WTC11 (cell line): ENCODE measurements at regions of chr11 and their contacts with region 1.

Region 1: DNA sequence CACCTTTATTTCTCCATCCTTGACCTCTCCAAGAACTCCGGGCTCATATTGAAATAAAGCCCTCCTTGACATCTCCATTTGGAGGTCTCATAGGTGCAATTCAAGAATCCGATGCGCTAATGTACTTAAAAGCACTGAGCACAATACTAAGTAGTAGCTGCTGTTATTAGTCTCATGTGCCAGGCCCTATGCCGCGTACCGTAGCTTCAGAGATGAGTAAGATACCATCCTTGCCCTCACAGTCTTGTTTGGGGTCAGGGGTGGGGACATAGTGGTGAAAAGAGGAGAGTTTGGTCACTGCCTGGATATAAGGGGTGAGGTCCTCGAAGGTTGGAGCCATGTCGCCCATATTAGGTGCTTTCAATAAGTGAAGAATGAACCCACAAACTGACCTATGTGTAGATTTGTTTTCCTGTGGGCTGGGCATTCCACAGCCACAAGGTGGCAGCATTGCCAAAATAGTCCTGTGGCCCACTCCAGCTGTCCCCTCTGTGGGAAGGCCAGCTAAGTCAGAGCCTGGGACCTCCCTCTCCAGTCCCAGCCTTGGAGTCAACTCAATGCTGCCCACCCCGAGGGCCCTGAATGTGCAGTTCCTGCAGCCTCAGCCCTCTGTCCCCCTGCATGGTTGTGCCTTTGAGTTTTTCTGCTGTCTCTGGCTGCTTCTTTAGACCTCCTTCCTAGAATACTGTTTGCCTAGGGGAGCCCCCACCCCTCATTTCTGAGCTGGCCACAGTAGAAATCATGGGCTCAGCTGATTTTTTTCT is 6.5 kb downstream of the DCPS start:
- DNase-seq: peak; percentile 82
- ATAC-seq: peak; percentile 95
- H3K4me3 Mint-ChIP-seq: no peak overlapping the region
- H3K27ac Mint-ChIP-seq: no peak overlapping the region
- H3K4me1 Mint-ChIP-seq: 0 out of 2 replicates have a peak, but pooled peaks cover 4% of the 10 kb centered on the region
- H3K27me3 Mint-ChIP-seq: no peaks in the 10 kb centered on the region
- CTCF ChIP-seq: peak; percentile 56; the same call in 1 of the 2 replicates

Region 2: GRCh38 chr11:125990244-125990643 is 320.2 kb before region 1 on chr11:
- CTCF ChIA-PET with region 1: no interaction called
- POLR2A ChIA-PET with region 1: no interaction called
- DNase-seq: no peak
- ATAC-seq: no peak
- H3K4me3 Mint-ChIP-seq: no peak overlapping the region
- H3K27ac Mint-ChIP-seq: no peak overlapping the region
- H3K4me1 Mint-ChIP-seq: peaks cover 13% of the 10 kb centered on the region
- H3K27me3 Mint-ChIP-seq: no peaks in the 10 kb centered on the region
- CTCF ChIP-seq: no peak

Region 3: GRCh38 chr11:126355324-126355925 is 45.0 kb after region 1 on chr11 and contains the start of gene ST3GAL4:
- CTCF ChIA-PET with region 1: interaction called, 17 read pairs
- POLR2A ChIA-PET with region 1: no interaction called
- DNase-seq: peak; percentile 87
- ATAC-seq: peak; percentile 88
- H3K4me3 Mint-ChIP-seq: peak within 1 kb of the TSS; percentile 91
- H3K27ac Mint-ChIP-seq: 0 out of 2 replicates have a peak within 1 kb of the TSS, but pooled peaks have one; percentile 53
- H3K4me1 Mint-ChIP-seq: peaks cover 52% of the 10 kb centered on the region
- H3K27me3 Mint-ChIP-seq: no peaks in the 10 kb centered on the region
- CTCF ChIP-seq: no peak
- total RNA-seq, gene ST3GAL4: 12.8 to 17.3 TPM (median 14.3 TPM) in 3 replicates

Region 4: DNA sequence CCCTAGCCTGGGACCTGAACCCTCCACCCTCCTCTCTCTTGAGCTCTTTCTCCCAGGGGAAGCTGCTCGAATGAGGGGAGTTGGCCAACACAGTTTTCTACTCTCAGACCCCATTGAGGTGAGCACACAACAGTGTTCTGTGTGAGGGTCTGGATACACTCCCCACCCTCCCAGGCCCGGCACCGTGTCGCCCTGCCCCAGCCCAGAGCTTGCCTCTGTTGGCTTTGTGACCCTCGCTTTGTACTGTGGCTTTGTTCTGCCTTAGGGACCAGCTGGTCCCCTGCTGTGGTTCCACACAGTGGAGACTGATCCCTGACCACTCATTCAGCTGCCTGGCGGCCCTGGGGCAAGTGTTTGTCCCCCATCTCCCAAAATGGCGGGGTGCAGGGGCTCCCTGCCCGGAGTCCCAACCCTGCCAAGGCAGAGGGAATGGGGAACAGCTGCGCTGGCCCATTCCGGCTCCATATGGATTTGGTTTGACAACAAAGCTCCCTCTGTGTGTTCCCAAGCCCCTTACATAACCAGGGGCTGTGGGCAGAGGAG is 53.4 kb after region 1 on chr11:
- CTCF ChIA-PET with region 1: interaction called, 17 read pairs
- POLR2A ChIA-PET with region 1: no interaction called
- DNase-seq: no peak
- ATAC-seq: no peak
- H3K4me3 Mint-ChIP-seq: no peak overlapping the region
- H3K27ac Mint-ChIP-seq: no peak overlapping the region
- H3K4me1 Mint-ChIP-seq: peaks cover 46% of the 10 kb centered on the region
- H3K27me3 Mint-ChIP-seq: no peaks in the 10 kb centered on the region
- CTCF ChIP-seq: no peak

Region 5: DNA sequence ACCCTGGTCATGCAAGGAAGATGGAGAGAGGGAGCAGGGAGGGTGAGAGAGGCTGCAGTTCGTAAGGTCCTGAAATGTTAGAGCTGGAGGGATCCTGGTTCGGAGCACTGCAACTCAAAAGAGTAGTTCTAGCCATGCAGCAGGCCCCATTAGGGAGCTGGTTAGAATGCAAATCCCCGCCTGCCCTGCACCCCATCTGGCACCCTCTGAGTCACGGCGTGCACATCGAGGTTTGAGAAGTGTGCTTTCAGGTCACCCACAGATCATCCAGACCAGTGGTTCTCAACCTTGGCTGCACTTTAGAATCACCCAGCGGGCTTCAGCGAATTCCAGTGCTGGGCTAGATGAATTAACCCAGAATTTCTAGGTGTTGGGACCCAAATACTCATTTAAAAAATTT is 93.2 kb after region 1 on chr11:
- CTCF ChIA-PET with region 1: interaction called, 10 read pairs
- POLR2A ChIA-PET with region 1: no interaction called
- DNase-seq: no peak
- ATAC-seq: peak; percentile 8; the same call in 1 of the 2 replicates
- H3K4me3 Mint-ChIP-seq: no peak overlapping the region
- H3K27ac Mint-ChIP-seq: no peak overlapping the region
- H3K4me1 Mint-ChIP-seq: peaks cover 32% of the 10 kb centered on the region
- H3K27me3 Mint-ChIP-seq: no peaks in the 10 kb centered on the region
- CTCF ChIP-seq: no peak

Region 6: GRCh38 chr11:126416542-126417090 is 106.2 kb after region 1 on chr11:
- CTCF ChIA-PET with region 1: interaction called, 12 read pairs
- POLR2A ChIA-PET with region 1: interaction called, 3 read pairs
- DNase-seq: peak; percentile 83
- ATAC-seq: peak; percentile 97
- H3K4me3 Mint-ChIP-seq: peak overlapping the region; percentile 50
- H3K27ac Mint-ChIP-seq: no peak overlapping the region
- H3K4me1 Mint-ChIP-seq: peaks cover 14% of the 10 kb centered on the region
- H3K27me3 Mint-ChIP-seq: peaks cover 8% of the 10 kb centered on the region
- CTCF ChIP-seq: no peak

Region 7: GRCh38 chr11:126440792-126441514 is 130.5 kb after region 1 on chr11:
- CTCF ChIA-PET with region 1: interaction called, 16 read pairs
- POLR2A ChIA-PET with region 1: no interaction called
- DNase-seq: peak; percentile 95
- ATAC-seq: peak; percentile 85
- H3K4me3 Mint-ChIP-seq: peak overlapping the region; percentile 42
- H3K27ac Mint-ChIP-seq: no peak overlapping the region
- H3K4me1 Mint-ChIP-seq: peaks cover 31% of the 10 kb centered on the region
- H3K27me3 Mint-ChIP-seq: no peaks in the 10 kb centered on the region; the same call in 1 of the 2 replicates
- CTCF ChIP-seq: peak; percentile 95